ENCODE measurements at regions of chr11 and their contacts with region 1.

Region 1: GRCh38 chr11:123560006-123560405 is 94.4 kb downstream of the SCN3B start:
- DNase-seq: peak in 1 of 2 donors; percentile 51
- ATAC-seq: peak; percentile 74 to 76
- H3K4me3 ChIP-seq: peak overlapping the region; percentile 47 to 61 (median 52)
- H3K27ac ChIP-seq: peak overlapping the region; percentile 29 to 58 (median 46)
- H3K4me1 ChIP-seq: peaks cover 10 to 17% of the 10 kb centered on the region in 2 donors
- H3K27me3 ChIP-seq: no peaks in the 10 kb centered on the region
- CTCF ChIP-seq: no peak
- POLR2A ChIP-seq: no peak

Region 2: GRCh38 chr11:123511037-123511870 is 48.8 kb before region 1 on chr11:
- in situ Hi-C with region 1: no loop called
- intact Hi-C with region 1: loop called (anchors 2 kb)
- DNase-seq: peak; percentile 49 to 67
- ATAC-seq: peak; percentile 63 to 84
- H3K4me3 ChIP-seq: no peak overlapping the region
- H3K27ac ChIP-seq: no peak overlapping the region
- H3K4me1 ChIP-seq: no peaks in the 10 kb centered on the region
- H3K27me3 ChIP-seq: no peaks in the 10 kb centered on the region
- CTCF ChIP-seq: peak; percentile 42 to 82 (median 67)
- POLR2A ChIP-seq: no peak

Region 3: DNA sequence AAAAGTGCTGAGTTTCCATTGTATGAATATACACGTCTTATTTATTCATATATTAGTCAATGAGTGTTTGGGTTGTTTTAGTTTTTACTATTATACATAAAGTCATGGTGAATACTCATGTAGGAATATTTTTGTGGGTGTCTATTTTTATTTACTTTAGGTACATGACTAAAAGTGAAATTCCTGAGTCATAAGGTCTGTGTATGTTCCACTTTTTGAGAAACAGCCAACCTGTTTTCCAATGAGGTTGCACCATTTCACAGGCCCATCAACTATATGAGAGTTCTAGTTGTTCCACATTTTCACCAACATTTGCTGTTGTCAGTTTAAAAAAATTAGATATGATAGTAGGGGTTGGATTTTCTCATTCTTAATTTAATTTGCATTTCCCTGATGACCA is 200.9 kb after region 1 on chr11:
- in situ Hi-C with region 1: no loop called
- intact Hi-C with region 1: no loop called
- DNase-seq: no peak
- ATAC-seq: no peak
- H3K4me3 ChIP-seq: no peak overlapping the region
- H3K27ac ChIP-seq: no peak overlapping the region
- H3K4me1 ChIP-seq: no peaks in the 10 kb centered on the region
- H3K27me3 ChIP-seq: no peaks in the 10 kb centered on the region
- CTCF ChIP-seq: no peak
- POLR2A ChIP-seq: no peak

Measured in gastrocnemius medialis (tissue), 4 donors.